ENCODE measurements at regions of chr4 and their contacts with region 1.

Region 1: DNA sequence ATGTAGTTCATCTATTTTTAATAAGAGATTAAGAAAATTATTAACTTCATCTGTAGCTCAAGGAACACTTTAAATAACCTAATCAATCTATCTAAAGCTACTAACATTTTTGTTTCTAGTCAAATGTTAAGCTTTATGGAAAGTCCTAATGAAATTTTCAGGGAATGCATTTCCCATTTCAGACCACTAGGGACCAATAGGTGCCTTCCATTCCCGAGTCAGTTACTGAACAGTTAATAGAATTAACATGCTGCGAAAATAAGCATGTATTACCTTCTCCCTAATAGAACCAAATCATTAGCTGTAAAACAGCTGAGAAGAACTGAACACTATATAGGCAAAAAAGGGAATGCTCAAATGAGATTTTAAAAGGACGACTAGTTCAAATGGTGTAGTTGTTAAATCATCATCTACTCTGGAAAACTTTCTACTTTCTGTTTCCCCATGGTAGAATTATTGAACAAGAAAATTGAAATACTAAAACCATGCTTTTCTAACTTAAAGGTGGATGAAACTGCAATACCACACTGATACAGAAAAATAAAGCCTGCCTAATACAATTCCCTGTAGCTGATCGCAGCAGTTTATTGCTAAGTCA is 22.5 kb downstream of the STX18 start:
- DNase-seq: peak; percentile 42
- H3K4me3 ChIP-seq: no peak overlapping the region
- H3K27ac ChIP-seq: no peak overlapping the region
- H3K4me1 ChIP-seq: peaks cover 5% of the 10 kb centered on the region
- H3K27me3 ChIP-seq: no peaks in the 10 kb centered on the region
- CTCF ChIP-seq: peak; percentile 36 to 61
- POLR2A ChIP-seq: no peak

Region 2: GRCh38 chr4:4502694-4503311 is 16.6 kb before region 1 on chr4:
- CTCF ChIA-PET with region 1: interaction called, 15 read pairs
- POLR2A ChIA-PET with region 1: no interaction called
- dilution Hi-C with region 1: no loop called
- intact Hi-C with region 1: no loop called
- DNase-seq: peak; percentile 64
- H3K4me3 ChIP-seq: peak overlapping the region in 1 of 3 experiments; percentile 34
- H3K27ac ChIP-seq: peak overlapping the region; percentile 26
- H3K4me1 ChIP-seq: peaks cover 7% of the 10 kb centered on the region
- H3K27me3 ChIP-seq: no peaks in the 10 kb centered on the region
- CTCF ChIP-seq: no peak
- POLR2A ChIP-seq: no peak

Region 3: GRCh38 chr4:4507923-4508322 is 11.5 kb before region 1 on chr4:
- CTCF ChIA-PET with region 1: interaction called, 15 read pairs
- POLR2A ChIA-PET with region 1: no interaction called
- dilution Hi-C with region 1: no loop called
- intact Hi-C with region 1: no loop called
- DNase-seq: peak; percentile 21
- H3K4me3 ChIP-seq: no peak overlapping the region
- H3K27ac ChIP-seq: no peak overlapping the region
- H3K4me1 ChIP-seq: peaks cover 2% of the 10 kb centered on the region
- H3K27me3 ChIP-seq: no peaks in the 10 kb centered on the region
- CTCF ChIP-seq: peak; percentile 41 to 59
- POLR2A ChIP-seq: no peak

Region 4: GRCh38 chr4:4533461-4534169 is 14.2 kb after region 1 on chr4:
- CTCF ChIA-PET with region 1: interaction called, 41 read pairs
- POLR2A ChIA-PET with region 1: no interaction called
- dilution Hi-C with region 1: no loop called
- intact Hi-C with region 1: no loop called
- DNase-seq: no peak
- H3K4me3 ChIP-seq: no peak overlapping the region
- H3K27ac ChIP-seq: no peak overlapping the region
- H3K4me1 ChIP-seq: no peaks in the 10 kb centered on the region
- H3K27me3 ChIP-seq: no peaks in the 10 kb centered on the region
- CTCF ChIP-seq: no peak
- POLR2A ChIP-seq: no peak

Region 5: GRCh38 chr4:4575273-4576211 is 56.1 kb after region 1 on chr4:
- CTCF ChIA-PET with region 1: interaction called, 10 read pairs
- POLR2A ChIA-PET with region 1: no interaction called
- dilution Hi-C with region 1: no loop called
- intact Hi-C with region 1: no loop called
- DNase-seq: peak; percentile 64
- H3K4me3 ChIP-seq: peak overlapping the region; percentile 39 to 63 (median 50)
- H3K27ac ChIP-seq: peak overlapping the region; percentile 62
- H3K4me1 ChIP-seq: peaks cover 5% of the 10 kb centered on the region
- H3K27me3 ChIP-seq: no peaks in the 10 kb centered on the region
- CTCF ChIP-seq: peak in 1 of 2 donors; percentile 51
- POLR2A ChIP-seq: peak; percentile 58

Measured in endothelial cell of umbilical vein (primary cell).